Activated T-helper 1 cell treated with anti-CD3 and anti-CD28 coated beads, Interleukin-12 subunit alpha, Interleukin-12 subunit beta, Interleukin-2, Interleukin-4 antibody, amounts not matched to agents 30 ng/mL and 10 ng/mL and 1 ng/mL, durations not matched to agents 14 hours and 24 hours and 36 hours (primary cell): ENCODE measurements at regions of chr10 and their contacts with region 1.

Region 1: DNA sequence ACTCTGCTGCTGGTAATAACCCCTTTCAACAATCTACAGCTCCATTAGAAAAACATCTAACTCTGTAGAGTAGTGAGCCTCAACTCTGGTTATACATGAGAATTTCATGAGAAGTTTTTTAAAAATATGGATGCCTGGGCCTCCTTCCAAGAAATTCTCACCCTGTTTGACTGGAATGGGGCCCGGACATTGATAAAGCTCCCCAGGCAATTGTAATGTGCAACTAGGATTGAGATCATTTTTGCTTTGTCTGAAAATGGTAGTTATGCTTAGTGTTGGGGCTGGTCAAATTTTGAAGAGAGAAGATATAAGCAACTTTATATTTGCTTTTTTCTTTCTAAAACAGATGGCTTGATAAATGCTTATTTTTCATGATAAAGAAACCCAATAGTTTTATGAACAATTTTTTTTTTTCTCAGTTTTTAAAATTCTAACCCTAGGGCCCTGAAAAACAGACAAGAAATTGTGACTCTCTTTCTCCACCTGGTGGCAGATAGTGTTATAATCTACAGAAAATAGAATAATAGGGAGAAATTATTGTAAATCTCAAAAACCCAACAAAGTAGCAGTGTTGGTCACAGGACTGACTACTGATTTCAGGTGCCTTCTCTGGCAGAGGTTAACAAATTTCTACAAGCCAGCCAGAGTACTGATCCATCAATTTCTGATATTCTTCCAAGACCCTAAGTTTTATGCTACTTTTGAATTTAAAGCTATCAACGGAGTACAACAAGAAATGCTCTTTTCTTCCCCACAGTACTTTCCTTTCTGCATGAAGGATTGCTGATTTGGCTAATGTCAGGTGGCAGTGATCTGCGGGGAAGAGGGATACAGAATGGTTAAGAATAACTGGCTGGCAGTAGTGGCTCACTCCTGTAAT is 174.8 kb downstream of the DKK1 start:
- DNase-seq: no peak
- H3K4me3 Mint-ChIP-seq: no peak overlapping the region
- H3K27ac Mint-ChIP-seq: no peak overlapping the region
- H3K4me1 Mint-ChIP-seq: no peaks in the 10 kb centered on the region
- H3K27me3 Mint-ChIP-seq: no peaks in the 10 kb centered on the region

Region 2: DNA sequence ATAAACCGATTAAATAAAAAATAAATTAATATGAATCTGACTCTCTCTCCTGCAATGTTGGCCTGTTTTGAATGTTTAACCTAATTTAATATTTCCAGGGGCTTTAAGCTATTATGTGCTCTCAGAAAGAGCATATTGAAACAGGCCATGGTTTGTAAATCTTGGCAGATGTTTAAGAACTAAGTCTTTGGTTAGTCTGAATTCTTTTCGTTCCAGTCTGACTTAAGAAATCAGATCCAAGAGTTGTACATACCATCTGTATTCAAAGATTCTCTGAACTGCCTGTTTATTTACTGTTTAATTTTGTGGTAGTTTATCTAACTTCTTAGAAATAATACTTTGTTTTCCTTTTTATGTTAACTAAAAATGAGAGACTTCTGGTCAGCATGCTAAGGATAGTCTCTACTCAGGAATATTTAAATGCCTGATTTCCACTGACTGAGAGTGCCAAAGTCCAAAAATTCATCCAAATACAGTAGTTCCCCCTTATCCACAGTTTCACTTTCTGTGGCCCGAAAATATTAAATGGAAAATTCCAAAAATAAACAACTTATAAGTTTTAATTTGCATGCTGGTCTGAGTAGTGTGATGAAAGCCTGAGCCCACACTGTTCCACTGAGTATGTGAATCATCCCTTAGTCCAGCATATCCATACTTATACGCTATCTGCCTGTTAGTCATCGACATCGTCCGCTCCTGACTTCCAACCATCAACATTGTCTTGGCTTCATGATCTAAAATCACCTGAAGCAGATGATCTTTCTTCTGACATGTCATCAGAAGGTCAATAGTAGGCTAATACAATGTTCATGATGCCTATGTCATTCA is 551.3 kb before region 1 on chr10:
- intact Hi-C with region 1: no loop called
- DNase-seq: no peak
- H3K4me3 Mint-ChIP-seq: no peak overlapping the region
- H3K27ac Mint-ChIP-seq: no peak overlapping the region
- H3K4me1 Mint-ChIP-seq: no peaks in the 10 kb centered on the region
- H3K27me3 Mint-ChIP-seq: peaks cover 23% of the 10 kb centered on the region

Region 3: GRCh38 chr10:52308251-52309031 is 180.4 kb before region 1 on chr10:
- intact Hi-C with region 1: loop called (anchors 2 kb)
- DNase-seq: no peak
- H3K4me3 Mint-ChIP-seq: no peak overlapping the region
- H3K27ac Mint-ChIP-seq: no peak overlapping the region
- H3K4me1 Mint-ChIP-seq: no peaks in the 10 kb centered on the region
- H3K27me3 Mint-ChIP-seq: peaks cover 47% of the 10 kb centered on the region